HCT116 (cell line): ENCODE measurements at regions of chr18 and their contacts with region 1.

Region 1: GRCh38 chr18:21774722-21775121 is 34.1 kb downstream of the MIB1 start:
- DNase-seq: no peak
- ATAC-seq: no peak
- H3K4me3 ChIP-seq: no peak overlapping the region
- H3K27ac ChIP-seq: no peak overlapping the region
- H3K4me1 ChIP-seq: no peaks in the 10 kb centered on the region
- H3K27me3 ChIP-seq: no peaks in the 10 kb centered on the region
- CTCF ChIP-seq: no peak
- POLR2A ChIP-seq: no peak
- RAD21 ChIP-seq: no peak

Region 2: GRCh38 chr18:22174341-22175145 is 399.8 kb after region 1 on chr18:
- CTCF ChIA-PET with region 1: no interaction called
- POLR2A ChIA-PET with region 1: no interaction called
- RAD21 ChIA-PET with region 1: no interaction called
- intact Hi-C with region 1: no loop called
- DNase-seq: no peak
- ATAC-seq: no peak
- H3K4me3 ChIP-seq: no peak overlapping the region
- H3K27ac ChIP-seq: no peak overlapping the region
- H3K4me1 ChIP-seq: peaks cover 0 to 5% of the 10 kb centered on the region in 2 experiments; a peak in 1 of 4 replicates
- H3K27me3 ChIP-seq: no peaks in the 10 kb centered on the region
- CTCF ChIP-seq: no peak
- POLR2A ChIP-seq: no peak
- RAD21 ChIP-seq: peak; percentile 22; the same call in 1 of the 2 replicates

Region 3: DNA sequence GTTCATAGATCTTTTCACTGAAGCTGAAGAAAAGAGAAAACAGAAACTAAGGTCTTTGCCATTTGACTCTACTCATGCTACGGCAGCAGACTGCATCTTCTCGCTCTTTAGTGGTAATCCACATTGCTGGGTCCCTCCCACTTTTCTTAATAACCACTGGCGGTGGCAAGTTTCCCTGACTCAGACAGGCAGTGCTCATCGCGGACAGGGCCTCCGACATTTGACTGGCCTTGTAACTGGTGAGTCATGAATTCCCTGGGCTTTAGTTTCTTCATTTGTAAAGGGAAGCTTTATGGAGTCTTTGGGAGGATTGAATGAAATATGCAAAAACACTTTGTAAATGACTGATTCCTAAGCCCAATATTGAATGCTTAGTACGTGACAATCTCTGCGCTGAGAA is 920.2 kb after region 1 on chr18:
- CTCF ChIA-PET with region 1: no interaction called
- POLR2A ChIA-PET with region 1: no interaction called
- RAD21 ChIA-PET with region 1: no interaction called
- intact Hi-C with region 1: loop called (anchors 5 kb)
- DNase-seq: peak; percentile 63
- ATAC-seq: peak; percentile 98
- H3K4me3 ChIP-seq: peak overlapping the region in 1 of 2 experiments; percentile 28; a peak in 2 of 4 replicates
- H3K27ac ChIP-seq: no peak overlapping the region
- H3K4me1 ChIP-seq: peaks cover 2 to 12% of the 10 kb centered on the region in 2 experiments
- H3K27me3 ChIP-seq: no peaks in the 10 kb centered on the region
- CTCF ChIP-seq: no peak
- POLR2A ChIP-seq: no peak
- RAD21 ChIP-seq: no peak